Activated CD8-positive, alpha-beta memory T cell treated with anti-CD3 and anti-CD28 coated beads, Interleukin-2, amount 10 ng/mL, durations not matched to agents 7 days and 5 days (primary cell): ENCODE measurements at regions of chr11 and their contacts with region 1.

Region 1: DNA sequence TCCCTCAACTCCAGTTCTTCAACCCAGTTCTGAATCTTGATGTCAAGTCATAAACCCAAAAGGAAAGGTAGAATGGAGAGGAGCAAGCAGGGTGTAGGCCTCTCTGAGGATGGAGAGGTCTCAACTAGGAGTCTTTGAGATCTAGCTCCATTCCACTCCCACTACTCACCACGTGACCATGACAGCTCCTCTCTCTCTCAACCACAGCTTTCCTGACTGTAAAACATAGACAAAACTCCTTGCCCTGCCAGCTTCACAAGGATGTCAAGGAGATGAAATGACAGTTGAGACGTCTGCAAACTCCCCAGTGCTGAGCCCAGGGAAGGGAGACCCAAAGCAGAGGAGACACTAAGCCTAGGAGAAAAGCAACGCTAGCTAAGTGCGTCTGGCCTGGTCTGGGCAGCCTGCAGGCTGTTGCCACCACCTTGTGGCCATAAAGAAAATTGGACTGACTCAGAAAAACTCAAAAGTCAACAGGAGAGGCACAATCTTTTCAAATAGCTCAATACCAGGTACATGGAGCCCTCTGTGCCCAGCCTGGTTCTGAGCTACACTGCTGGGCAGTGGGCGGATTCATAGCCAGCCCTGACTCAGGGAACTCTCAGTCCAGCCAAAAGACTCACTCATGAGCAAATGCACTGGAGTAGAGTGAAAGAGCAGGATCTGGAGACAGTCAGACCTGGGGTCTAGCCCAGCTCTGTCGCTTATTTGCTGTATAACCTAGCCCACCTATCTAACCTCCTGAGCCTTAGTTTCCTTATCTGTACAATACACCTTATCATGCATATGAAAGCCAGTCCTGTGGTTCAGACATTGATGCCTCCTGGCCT is 3.4 kb downstream of the CLPB start:
- DNase-seq: peak; percentile 57
- ATAC-seq: peak; percentile 25
- H3K4me3 Mint-ChIP-seq: no peak overlapping the region
- H3K27ac Mint-ChIP-seq: peak overlapping the region; percentile 42
- H3K4me1 Mint-ChIP-seq: peaks cover 45% of the 10 kb centered on the region
- H3K27me3 Mint-ChIP-seq: no peaks in the 10 kb centered on the region

Region 2: GRCh38 chr11:72141066-72141465 is 289.9 kb before region 1 on chr11:
- CTCF ChIA-PET with region 1: interaction called, 17 read pairs
- DNase-seq: peak; percentile 78
- ATAC-seq: peak; percentile 78
- H3K4me3 Mint-ChIP-seq: peak overlapping the region; percentile 0
- H3K27ac Mint-ChIP-seq: peak overlapping the region; percentile 67
- H3K4me1 Mint-ChIP-seq: peaks cover 45% of the 10 kb centered on the region
- H3K27me3 Mint-ChIP-seq: no peaks in the 10 kb centered on the region

Region 3: GRCh38 chr11:72274435-72274834 is 156.5 kb before region 1 on chr11:
- CTCF ChIA-PET with region 1: interaction called, 10 read pairs
- DNase-seq: no peak
- ATAC-seq: no peak
- H3K4me3 Mint-ChIP-seq: no peak overlapping the region
- H3K27ac Mint-ChIP-seq: no peak overlapping the region
- H3K4me1 Mint-ChIP-seq: peaks cover 11% of the 10 kb centered on the region
- H3K27me3 Mint-ChIP-seq: peaks cover 29% of the 10 kb centered on the region

Region 4: DNA sequence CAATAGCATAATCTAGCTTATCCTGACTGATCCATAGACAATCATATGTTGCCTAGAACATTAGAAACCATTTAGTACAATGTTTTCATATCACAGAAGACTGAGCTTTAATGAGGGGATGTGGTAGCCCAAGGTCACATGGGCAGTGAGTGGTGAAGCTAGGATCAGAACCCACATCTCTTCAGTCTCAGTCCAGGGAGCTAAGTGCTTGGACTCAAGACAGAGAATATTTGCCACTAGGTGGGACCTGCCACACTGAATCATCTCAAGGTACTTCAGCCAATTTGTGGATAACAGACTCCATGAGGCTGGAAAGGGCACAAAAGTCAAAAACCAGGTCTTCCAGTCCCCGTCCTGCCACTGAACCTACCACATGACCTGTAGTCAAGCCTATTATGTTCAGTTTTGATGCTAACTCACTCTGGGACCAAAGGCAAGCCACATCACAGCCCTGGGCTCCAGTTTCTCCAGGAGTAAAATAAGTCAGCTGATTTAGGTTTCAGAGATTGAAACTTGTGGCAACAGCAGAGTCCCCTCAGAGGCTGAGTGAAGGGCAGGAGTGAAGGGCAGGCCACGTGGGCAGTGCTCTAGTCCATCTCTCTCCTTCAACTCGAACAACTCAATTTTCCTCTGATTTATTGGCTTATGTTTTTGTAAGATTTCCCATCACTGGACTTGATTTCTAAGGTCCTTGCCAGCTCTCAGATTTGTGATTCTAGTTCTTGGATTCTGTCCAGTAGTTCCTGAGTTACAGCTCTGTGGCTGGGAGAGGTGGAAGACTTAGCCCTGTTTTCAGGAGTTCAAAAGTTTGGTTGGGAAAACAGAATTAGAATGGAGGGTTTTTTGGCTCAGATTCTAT is 102.4 kb before region 1 on chr11:
- CTCF ChIA-PET with region 1: interaction called, 56 read pairs
- DNase-seq: peak; percentile 62
- ATAC-seq: peak; percentile 55
- H3K4me3 Mint-ChIP-seq: no peak overlapping the region
- H3K27ac Mint-ChIP-seq: peak overlapping the region; percentile 64
- H3K4me1 Mint-ChIP-seq: peaks cover 62% of the 10 kb centered on the region
- H3K27me3 Mint-ChIP-seq: no peaks in the 10 kb centered on the region

Region 5: DNA sequence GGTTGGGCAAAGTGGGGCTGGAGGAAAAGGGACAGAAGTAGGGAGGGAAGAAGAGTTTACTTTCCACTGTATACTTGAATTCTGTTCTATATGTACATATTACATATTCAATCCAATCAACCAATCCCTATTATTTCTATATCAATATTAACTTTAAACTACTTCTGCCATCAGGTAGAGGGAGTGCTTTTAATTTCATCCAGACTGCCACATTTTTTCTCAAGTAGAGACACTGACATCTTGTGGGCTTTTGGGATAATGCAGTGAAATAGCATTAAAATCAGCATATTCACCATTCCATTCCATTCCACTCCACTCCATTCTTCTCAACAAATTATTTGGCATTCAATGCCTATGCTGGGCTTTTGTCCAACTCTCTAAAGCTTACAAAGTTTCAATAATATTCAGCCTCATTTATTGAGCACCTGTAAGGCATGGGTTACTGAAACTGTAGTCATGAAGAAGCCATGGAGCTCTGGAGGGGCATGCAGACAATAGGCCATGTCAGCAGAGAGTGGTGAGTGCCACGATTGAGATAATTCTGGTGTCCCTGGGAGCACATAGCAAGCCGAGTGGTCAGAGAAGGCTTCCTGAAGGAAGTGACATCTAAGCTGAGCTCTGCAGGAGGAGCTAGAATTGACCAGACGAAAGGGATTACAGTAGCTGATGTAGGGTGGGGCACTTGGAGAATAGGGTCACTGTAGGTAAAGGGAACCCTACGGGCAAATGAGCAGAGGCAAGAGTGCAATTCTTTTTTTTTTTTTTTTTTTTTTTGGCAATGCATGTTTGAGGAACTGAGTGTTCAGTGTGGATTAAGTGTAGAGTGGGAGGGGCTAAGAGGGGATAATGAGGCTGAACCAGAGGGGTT is 16.2 kb after region 1 on chr11:
- CTCF ChIA-PET with region 1: interaction called, 99 read pairs
- DNase-seq: no peak
- ATAC-seq: peak; percentile 64
- H3K4me3 Mint-ChIP-seq: no peak overlapping the region
- H3K27ac Mint-ChIP-seq: no peak overlapping the region
- H3K4me1 Mint-ChIP-seq: peaks cover under 1% of the 10 kb centered on the region
- H3K27me3 Mint-ChIP-seq: peaks cover 24% of the 10 kb centered on the region

Region 6: DNA sequence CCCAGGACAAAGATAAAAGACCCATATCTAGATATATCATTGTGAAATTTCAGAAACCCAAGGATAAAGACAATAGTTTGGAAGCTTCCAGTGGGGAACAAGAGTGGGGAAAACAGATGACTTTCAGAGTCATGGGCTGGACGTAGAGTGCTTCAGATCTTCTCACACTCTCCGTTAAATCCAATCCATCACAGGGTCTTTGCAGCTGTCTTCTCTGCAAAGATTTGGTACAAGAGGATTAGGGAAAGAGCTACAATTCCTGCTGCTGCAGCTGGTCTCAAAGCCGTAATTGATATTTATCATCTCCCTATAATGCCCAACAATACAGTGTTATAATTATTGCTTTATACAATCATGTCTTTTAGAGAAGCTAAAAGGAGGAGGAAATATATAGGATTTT is 66.8 kb after region 1 on chr11:
- CTCF ChIA-PET with region 1: no interaction called
- DNase-seq: no peak
- ATAC-seq: no peak
- H3K4me3 Mint-ChIP-seq: no peak overlapping the region
- H3K27ac Mint-ChIP-seq: no peak overlapping the region
- H3K4me1 Mint-ChIP-seq: peaks cover 9% of the 10 kb centered on the region
- H3K27me3 Mint-ChIP-seq: peaks cover 5% of the 10 kb centered on the region

Region 7: GRCh38 chr11:72525466-72525865 is 94.5 kb after region 1 on chr11:
- CTCF ChIA-PET with region 1: no interaction called
- DNase-seq: no peak
- ATAC-seq: no peak
- H3K4me3 Mint-ChIP-seq: no peak overlapping the region
- H3K27ac Mint-ChIP-seq: no peak overlapping the region
- H3K4me1 Mint-ChIP-seq: peaks cover 9% of the 10 kb centered on the region
- H3K27me3 Mint-ChIP-seq: peaks cover 11% of the 10 kb centered on the region

Region 8: DNA sequence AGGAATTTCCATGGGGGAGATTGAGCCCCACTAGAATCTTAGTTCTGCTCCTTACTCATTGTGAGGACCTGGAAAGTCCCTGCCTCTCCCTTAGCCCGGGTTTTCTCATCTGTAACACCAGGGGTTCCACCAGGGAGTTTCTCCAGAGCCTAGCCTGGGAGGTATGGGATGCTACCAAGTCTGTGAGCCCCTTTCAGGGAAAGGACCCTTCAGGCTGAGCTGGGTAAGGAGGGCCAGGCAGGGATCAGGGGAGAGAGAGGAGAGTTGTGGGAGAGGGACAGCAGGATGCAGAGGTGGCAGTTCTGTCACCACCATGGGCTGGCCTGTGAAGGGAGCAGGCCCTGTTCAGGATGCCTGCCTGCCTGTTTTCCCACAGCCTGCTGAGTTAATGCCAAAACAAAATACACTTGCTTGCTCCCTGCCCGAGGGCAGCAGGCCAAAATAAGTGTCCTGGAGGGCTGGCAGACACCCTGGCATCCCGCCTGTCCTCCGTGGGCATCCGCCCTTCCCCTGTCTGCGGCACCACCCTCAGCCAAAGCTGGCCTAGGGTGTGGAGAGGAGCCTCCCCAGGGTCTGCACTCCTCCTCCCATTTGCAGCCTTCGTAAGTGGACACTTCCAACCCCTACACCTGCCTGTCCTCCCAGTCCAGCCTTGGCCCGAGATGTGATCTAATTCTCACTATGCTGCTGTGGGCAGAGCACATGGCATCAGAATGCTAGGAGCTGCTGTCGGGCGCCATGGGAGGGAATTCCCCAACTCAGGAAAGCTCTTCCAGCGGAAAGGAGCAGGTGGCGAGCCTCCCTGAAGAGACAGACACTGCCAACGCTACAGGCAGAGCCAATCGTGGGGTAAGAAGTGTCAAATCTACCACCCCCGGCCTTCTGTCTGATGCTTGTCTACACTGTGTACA is 717.1 kb after region 1 on chr11:
- CTCF ChIA-PET with region 1: no interaction called
- DNase-seq: no peak
- ATAC-seq: no peak
- H3K4me3 Mint-ChIP-seq: no peak overlapping the region
- H3K27ac Mint-ChIP-seq: no peak overlapping the region
- H3K4me1 Mint-ChIP-seq: peaks cover 58% of the 10 kb centered on the region
- H3K27me3 Mint-ChIP-seq: no peaks in the 10 kb centered on the region